HAP-1 (cell line): ENCODE measurements at regions of chr12 and their contacts with region 1.

Region 1: DNA sequence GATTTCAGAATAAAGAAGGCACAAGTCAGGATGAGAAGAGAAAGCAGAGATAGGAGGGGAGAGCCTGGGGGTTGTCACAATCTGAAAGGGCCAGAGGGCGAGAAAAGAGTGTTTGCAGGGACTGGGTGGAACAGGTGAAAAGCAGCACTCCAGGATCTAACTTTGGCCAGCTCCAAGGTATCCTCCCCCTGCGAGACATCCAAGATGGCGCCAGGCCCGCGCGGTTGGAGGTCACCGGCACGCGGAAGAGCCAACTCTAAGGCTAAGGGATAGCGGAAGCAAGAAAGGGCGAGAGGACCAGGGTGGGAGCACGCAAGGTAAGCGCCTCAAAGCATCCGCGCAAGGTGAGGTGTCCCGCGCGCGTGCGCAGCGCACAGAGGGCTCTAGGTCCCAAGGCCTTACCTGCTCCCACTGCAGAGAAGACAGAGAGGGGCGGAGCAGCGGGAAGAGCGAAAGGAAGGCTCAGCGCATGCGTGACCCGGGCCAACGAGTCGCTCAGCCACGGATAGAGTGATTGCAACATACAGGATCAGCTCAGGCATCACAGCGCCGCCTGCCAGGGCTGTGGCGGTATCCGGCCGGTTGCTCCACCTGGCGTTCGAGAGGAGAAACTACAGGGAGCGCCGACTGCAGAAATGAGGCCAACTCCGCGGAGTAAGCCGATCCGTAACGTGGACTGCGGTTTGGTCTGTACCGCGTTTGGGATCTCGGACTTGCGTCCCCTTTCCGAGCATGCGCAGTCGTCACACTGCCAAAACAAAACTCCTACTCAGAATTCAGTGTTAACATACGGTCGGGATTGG is at the start of gene ATP5MC2:
- DNase-seq: peak; percentile 96 to 97
- H3K4me3 ChIP-seq: peak within 1 kb of the TSS; percentile 78
- H3K4me1 ChIP-seq: peaks cover 15% of the 10 kb centered on the region
- H3K27me3 ChIP-seq: peaks cover 10% of the 10 kb centered on the region

Region 2: DNA sequence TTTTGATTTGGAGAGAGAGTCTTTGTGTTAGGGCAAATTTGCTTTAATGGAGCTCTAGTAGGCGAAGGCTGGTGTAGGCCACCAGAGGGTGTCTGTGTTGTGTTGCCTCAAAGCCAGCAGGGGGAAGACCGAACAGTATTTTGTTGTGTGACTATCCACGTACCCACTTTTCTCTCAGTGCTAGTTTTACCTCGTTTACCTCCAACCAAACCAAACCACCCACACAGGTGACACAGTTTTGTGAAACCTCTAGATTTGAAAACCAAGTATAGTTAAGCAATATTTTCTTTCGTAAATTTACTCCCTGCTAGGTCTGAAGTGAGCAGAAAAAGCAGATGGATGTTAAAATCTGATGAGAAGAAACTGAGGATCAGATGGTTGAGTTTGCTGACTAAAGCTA is 132.3 kb before region 1 on chr12:
- in situ Hi-C with region 1: loop called (anchors 10 kb)
- DNase-seq: peak; percentile 35 to 59
- H3K4me3 ChIP-seq: no peak overlapping the region
- H3K4me1 ChIP-seq: no peaks in the 10 kb centered on the region
- H3K27me3 ChIP-seq: no peaks in the 10 kb centered on the region

Region 3: DNA sequence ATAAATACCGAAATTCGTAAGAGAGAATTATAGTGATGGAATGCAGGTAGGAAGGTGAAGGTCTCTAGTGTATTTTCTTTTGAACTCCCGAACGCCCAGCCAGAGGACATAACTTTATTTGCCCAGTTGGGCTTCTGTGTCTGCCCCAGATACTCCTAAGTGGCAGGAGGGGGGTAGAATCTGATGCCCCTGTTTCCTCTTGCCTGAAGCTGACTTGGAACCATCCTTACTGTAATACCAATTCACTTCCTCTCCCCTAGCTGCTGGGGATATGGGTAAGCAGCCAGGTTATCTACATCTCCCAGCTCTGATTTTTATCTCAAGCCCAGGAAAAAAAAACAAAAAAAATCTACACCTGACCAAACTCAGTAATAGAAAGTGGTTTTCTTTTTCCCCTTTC is 160.4 kb after region 1 on chr12:
- in situ Hi-C with region 1: no loop called
- DNase-seq: no peak
- H3K4me3 ChIP-seq: no peak overlapping the region
- H3K4me1 ChIP-seq: no peaks in the 10 kb centered on the region
- H3K27me3 ChIP-seq: peaks cover 66% of the 10 kb centered on the region